IMR-90 (cell line): ENCODE measurements at regions of chr18 and their contacts with region 1.

Region 1: DNA sequence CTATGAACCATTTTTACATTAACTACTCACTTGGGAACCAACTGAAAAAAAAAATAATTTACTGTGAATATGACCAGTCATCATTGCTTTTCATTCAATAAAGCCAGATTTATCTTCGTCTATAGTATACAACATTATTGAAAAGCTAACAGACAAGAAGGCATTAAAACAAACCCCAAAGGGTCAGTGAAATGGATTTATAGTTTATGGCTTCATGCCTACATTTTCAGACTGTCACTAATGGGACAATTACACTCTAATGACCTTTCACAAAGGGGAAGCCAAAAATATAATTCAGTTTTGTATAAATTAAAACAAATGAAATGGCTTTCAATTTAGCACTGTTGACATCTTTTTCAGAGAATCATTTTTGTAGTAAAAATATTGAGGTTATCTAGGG is 169.1 kb downstream of the DSEL start:
- DNase-seq: no peak
- ATAC-seq: no peak
- H3K4me3 ChIP-seq: no peak overlapping the region
- H3K27ac ChIP-seq: no peak overlapping the region
- H3K4me1 ChIP-seq: no peaks in the 10 kb centered on the region
- H3K27me3 ChIP-seq: no peaks in the 10 kb centered on the region
- CTCF ChIP-seq: no peak
- POLR2A ChIP-seq: no peak
- RAD21 ChIP-seq: no peak

Region 2: GRCh38 chr18:67310826-67311225 is 36.6 kb before region 1 on chr18:
- CTCF ChIA-PET with region 1: no interaction called
- POLR2A ChIA-PET with region 1: no interaction called
- dilution Hi-C with region 1: no loop called
- in situ Hi-C with region 1: no loop called
- intact Hi-C with region 1: loop called (anchors 5 kb)
- DNase-seq: peak; percentile 47
- ATAC-seq: peak; percentile 73
- H3K4me3 ChIP-seq: no peak overlapping the region
- H3K27ac ChIP-seq: no peak overlapping the region
- H3K4me1 ChIP-seq: no peaks in the 10 kb centered on the region
- H3K27me3 ChIP-seq: no peaks in the 10 kb centered on the region
- CTCF ChIP-seq: no peak
- POLR2A ChIP-seq: no peak
- RAD21 ChIP-seq: no peak

Region 3: DNA sequence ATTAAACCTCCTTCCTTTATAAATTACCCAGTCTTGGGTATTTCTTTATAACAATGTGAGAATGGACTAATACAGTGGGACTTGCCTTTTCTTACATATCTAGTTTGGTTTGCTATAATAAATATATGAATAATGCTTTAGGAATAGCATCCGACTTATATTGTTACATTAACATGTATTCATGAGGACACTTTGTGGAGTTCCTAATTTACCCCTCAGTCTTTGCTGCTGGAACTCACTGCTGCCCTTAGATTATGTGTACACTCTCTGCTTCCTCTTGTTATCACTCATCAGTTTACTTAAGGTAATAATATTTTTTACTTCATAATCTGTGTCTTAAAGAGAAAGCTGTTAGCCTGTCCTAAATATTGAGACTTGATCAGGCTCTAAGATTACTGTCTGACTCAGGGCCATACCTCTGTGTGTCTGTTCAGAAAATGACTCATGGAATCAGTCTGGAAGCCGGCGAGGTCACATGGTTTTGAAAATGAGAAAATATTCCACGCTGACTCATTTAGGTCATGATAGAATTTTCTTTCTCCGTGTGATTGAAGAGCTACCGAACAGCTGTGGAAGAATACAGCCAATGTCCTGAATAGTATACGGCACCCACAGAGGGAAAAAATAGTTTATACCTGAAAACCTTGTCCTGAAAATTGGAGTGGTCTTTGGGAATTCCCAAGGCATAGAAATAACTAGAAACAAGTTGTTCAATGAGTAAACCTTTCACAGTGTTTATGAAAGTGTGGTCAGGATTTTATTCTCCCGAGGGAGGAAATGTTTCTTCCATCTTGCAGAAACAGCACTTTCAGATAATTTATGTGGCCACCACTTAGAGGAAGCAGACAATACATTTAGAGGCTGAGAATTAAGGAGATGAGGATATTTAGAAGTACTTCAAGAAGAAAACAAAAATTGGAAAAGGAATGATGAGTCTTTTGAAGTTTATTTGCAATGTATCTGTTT is 12.7 kb after region 1 on chr18:
- CTCF ChIA-PET with region 1: no interaction called
- POLR2A ChIA-PET with region 1: interaction called, 13 read pairs
- dilution Hi-C with region 1: no loop called
- in situ Hi-C with region 1: no loop called
- intact Hi-C with region 1: no loop called
- DNase-seq: peak; percentile 96
- ATAC-seq: peak; percentile 97
- H3K4me3 ChIP-seq: peak overlapping the region; percentile 37; the same call in 1 of the 2 replicates
- H3K27ac ChIP-seq: no peak overlapping the region
- H3K4me1 ChIP-seq: peaks cover 3% of the 10 kb centered on the region; the same call in 1 of the 2 replicates
- H3K27me3 ChIP-seq: no peaks in the 10 kb centered on the region
- CTCF ChIP-seq: no peak
- POLR2A ChIP-seq: no peak
- RAD21 ChIP-seq: no peak; the same call in 1 of the 2 replicates

Region 4: DNA sequence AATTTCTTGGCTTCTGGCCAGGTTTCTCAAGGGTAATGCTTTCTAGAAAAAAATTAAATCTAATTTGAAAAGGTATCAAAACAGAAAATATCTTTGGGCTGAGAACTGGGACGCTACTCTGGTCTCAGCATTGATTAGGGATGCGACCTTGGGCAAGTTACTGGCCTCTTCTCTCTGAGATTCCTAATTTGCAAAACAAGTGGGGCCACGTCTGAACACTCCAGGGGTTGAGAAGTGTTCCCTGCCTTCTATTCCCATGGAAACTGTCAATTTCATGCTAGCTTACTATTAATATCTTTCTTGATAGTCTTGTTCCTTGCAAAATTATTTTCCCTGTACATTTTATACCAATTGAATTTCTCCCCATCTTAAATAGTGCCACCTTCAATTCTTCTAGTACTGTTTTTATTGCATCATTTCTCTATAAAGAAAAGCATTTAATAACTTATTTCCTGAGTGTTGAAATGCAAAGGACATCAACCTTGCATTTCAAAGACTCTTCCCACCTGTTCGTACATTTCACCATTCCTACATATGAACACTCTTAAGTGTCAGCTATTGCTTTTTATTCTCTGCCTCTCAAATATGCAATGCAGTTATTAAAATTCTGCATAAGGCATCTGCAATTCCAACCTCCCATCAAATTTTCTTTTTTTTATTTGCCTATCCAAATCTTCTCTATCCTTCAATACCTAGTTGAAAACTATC is 287.3 kb after region 1 on chr18:
- CTCF ChIA-PET with region 1: no interaction called
- POLR2A ChIA-PET with region 1: no interaction called
- dilution Hi-C with region 1: no loop called
- in situ Hi-C with region 1: no loop called
- intact Hi-C with region 1: no loop called
- DNase-seq: no peak
- ATAC-seq: no peak
- H3K4me3 ChIP-seq: no peak overlapping the region
- H3K27ac ChIP-seq: no peak overlapping the region
- H3K4me1 ChIP-seq: no peaks in the 10 kb centered on the region
- H3K27me3 ChIP-seq: no peaks in the 10 kb centered on the region
- CTCF ChIP-seq: no peak
- POLR2A ChIP-seq: no peak
- RAD21 ChIP-seq: no peak